ENCODE measurements at regions of chr3 and their contacts with region 1.

Region 1: GRCh38 chr3:14672588-14672987 is 2.4 kb upstream of the C3orf20 start:
- DNase-seq: no peak
- ATAC-seq: no peak
- H3K4me3 ChIP-seq: no peak overlapping the region
- H3K27ac ChIP-seq: no peak overlapping the region
- H3K4me1 ChIP-seq: no peaks in the 10 kb centered on the region
- CTCF ChIP-seq: no peak
- EP300 ChIP-seq: no peak
- POLR2A ChIP-seq: no peak
- RAD21 ChIP-seq: no peak

Region 2: DNA sequence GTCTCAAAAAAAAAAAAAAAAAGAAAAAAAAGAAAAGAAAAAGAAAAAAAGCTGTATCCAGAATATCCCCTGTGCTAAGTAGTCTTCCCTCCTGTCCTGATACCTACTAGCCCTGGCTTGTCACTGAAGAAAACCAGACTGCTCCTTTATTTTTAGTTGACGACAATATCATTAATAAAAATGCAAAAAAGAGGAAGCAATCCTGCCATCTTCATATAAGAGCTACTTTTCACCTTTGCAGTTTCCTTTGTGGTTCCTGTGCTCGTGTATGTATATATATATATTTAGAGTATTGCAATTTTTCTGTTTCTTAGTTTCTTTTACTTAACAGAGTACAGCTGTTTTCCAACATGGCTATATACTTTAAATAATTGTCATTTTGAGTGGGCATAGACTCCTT is 15.9 kb after region 1 on chr3:
- CTCF ChIA-PET with region 1: interaction called, 31 read pairs
- POLR2A ChIA-PET with region 1: no interaction called
- DNase-seq: no peak
- ATAC-seq: no peak
- H3K4me3 ChIP-seq: no peak overlapping the region
- H3K27ac ChIP-seq: no peak overlapping the region
- H3K4me1 ChIP-seq: no peaks in the 10 kb centered on the region
- CTCF ChIP-seq: no peak
- EP300 ChIP-seq: no peak
- POLR2A ChIP-seq: no peak
- RAD21 ChIP-seq: no peak

Region 3: DNA sequence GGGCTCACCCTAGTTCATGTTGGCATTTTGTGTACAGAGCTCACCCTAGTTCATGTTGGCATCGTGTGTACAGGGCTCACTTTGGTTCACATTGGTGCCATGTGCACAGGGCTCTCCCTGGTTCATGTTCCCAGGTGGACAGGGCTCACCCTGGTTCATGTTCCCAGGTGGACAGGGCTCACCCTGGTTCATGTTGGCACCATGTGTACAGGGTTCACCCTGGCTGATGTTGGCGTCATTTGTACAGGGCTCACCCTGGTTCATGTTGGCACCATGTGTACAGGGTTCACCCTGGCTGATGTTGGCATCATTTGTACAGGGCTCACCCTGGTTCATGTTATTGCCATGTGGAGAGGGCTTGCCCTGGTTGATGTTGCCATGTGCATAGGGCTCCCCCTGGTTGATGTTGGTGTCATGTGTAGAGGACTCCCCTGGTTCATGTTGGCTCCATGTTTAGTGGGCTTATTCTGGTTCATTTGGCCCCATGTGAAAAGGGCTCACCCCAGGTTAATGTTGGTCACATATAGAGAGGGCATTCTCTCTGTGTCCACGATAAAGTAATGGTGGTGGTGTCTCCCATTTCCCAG is 243.1 kb after region 1 on chr3:
- CTCF ChIA-PET with region 1: interaction called, 119 read pairs
- POLR2A ChIA-PET with region 1: no interaction called
- DNase-seq: peak in 1 of 2 experiments; percentile 20
- ATAC-seq: peak in 1 of 2 experiments; percentile 56; a peak in 3 of 6 replicates
- H3K4me3 ChIP-seq: no peak overlapping the region
- H3K27ac ChIP-seq: no peak overlapping the region
- H3K4me1 ChIP-seq: no peaks in the 10 kb centered on the region
- CTCF ChIP-seq: no peak; the same call in 2 of the 3 replicates
- EP300 ChIP-seq: no peak
- POLR2A ChIP-seq: no peak
- RAD21 ChIP-seq: peak in 1 of 2 experiments; percentile 46; a peak in 1 of 5 replicates

Region 4: GRCh38 chr3:15498431-15499214 is 826.0 kb after region 1 on chr3:
- CTCF ChIA-PET with region 1: no interaction called
- POLR2A ChIA-PET with region 1: no interaction called
- DNase-seq: no peak
- ATAC-seq: no peak; a peak in 1 of 6 replicates
- H3K4me3 ChIP-seq: no peak overlapping the region
- H3K27ac ChIP-seq: no peak overlapping the region
- H3K4me1 ChIP-seq: no peaks in the 10 kb centered on the region
- CTCF ChIP-seq: no peak
- EP300 ChIP-seq: no peak
- POLR2A ChIP-seq: no peak
- RAD21 ChIP-seq: no peak